ENCODE measurements at regions of chr2 and their contacts with region 1.

Region 1: DNA sequence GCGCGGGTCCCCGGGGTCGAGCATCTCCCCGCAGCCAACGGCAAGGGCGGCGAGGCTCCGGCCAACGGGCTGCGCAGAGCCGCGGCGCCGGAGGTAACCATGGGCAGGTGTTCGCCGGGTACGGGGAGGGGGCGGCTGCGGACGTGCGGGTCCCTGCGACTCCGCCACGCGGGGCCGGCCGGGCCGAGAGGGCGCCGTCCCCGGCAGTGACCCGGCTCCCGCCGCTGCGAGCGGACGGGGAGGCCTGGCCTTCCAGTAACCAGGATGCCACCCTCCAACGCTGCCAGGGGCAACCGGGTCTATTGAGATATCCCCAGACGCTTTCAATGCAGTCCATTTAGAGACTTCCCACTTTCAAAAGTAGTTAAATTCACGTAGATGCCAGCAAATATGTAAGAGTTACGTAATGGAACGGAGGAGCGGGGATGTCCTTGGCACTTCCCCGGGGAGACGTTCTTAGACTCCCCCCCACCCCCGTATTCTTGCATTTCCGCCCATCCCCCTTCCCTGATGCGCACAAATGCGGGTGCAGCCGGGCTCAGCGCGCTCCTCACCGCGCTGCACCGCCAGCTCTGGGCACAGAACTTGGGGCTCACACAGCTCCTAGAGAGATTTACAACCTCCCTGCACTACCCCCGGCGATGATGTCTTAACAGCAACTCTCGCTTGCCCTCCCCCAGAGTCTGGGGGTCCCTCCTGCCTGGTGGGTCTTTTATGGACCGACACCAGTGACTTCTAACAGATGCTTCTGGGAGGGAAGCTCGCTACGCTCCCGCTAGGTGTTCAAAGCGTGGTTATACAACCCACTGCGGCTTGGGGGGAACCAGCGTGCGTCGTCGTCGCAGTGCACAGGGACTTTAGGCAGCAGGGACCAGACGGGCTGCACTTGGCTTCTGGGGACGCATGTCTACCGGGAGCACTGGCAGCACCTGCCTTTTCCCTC is 657 bp downstream of the SGPP2 start:
- DNase-seq: peak; percentile 36 to 75 (median 38)
- H3K4me3 ChIP-seq: peak overlapping the region; percentile 50 to 65
- H3K4me3 Mint-ChIP-seq: peak overlapping the region; percentile 92 to 97 (median 94)
- H3K27ac ChIP-seq: peak overlapping the region; percentile 58
- H3K27ac Mint-ChIP-seq: peak overlapping the region; percentile 86 to 97 (median 91)
- H3K4me1 ChIP-seq: peaks cover 44% of the 10 kb centered on the region
- H3K4me1 Mint-ChIP-seq: peaks cover 30 to 59% (median 47%) of the 10 kb centered on the region in 4 donors
- H3K27me3 ChIP-seq: no peaks in the 10 kb centered on the region
- H3K27me3 Mint-ChIP-seq: peaks cover 2 to 8% of the 10 kb centered on the region in 2 donors

Region 2: GRCh38 chr2:222218786-222219185 is 206.2 kb before region 1 on chr2:
- CTCF ChIA-PET with region 1: no interaction called
- POLR2A ChIA-PET with region 1: no interaction called
- intact Hi-C with region 1: no loop called
- DNase-seq: no peak
- H3K4me3 ChIP-seq: no peak overlapping the region
- H3K4me3 Mint-ChIP-seq: no peak overlapping the region
- H3K27ac ChIP-seq: no peak overlapping the region
- H3K27ac Mint-ChIP-seq: no peak overlapping the region
- H3K4me1 ChIP-seq: no peaks in the 10 kb centered on the region
- H3K4me1 Mint-ChIP-seq: no peaks in the 10 kb centered on the region
- H3K27me3 ChIP-seq: no peaks in the 10 kb centered on the region
- H3K27me3 Mint-ChIP-seq: peaks cover 2% of the 10 kb centered on the region in 2 donors

Region 3: GRCh38 chr2:222561817-222562645 is 137.0 kb after region 1 on chr2:
- CTCF ChIA-PET with region 1: no interaction called
- POLR2A ChIA-PET with region 1: no interaction called
- intact Hi-C with region 1: loop called (anchors 5 kb)
- DNase-seq: peak; percentile 16 to 52 (median 36)
- H3K4me3 ChIP-seq: no peak overlapping the region
- H3K4me3 Mint-ChIP-seq: no peak overlapping the region
- H3K27ac ChIP-seq: no peak overlapping the region
- H3K27ac Mint-ChIP-seq: peak overlapping the region in 1 of 7 donors; percentile 65
- H3K4me1 ChIP-seq: no peaks in the 10 kb centered on the region
- H3K4me1 Mint-ChIP-seq: peaks cover 0 to under 1% (median 0%) of the 10 kb centered on the region in 4 donors
- H3K27me3 ChIP-seq: no peaks in the 10 kb centered on the region
- H3K27me3 Mint-ChIP-seq: peaks cover 0 to 2% of the 10 kb centered on the region in 2 donors